Naive thymus-derived CD4-positive, alpha-beta T cell (primary cell): ENCODE measurements at regions of chr2 and their contacts with region 1.

Region 1: GRCh38 chr2:64052468-64053241 is 33.4 kb upstream of the VPS54 start:
- DNase-seq: peak in 7 of 9 donors; percentile 14 to 63 (median 44)
- ATAC-seq: peak; percentile 48
- H3K4me3 ChIP-seq: no peak overlapping the region
- H3K4me3 Mint-ChIP-seq: peak overlapping the region in 9 of 10 donors; percentile 23 to 68 (median 53)
- H3K27ac ChIP-seq: no peak overlapping the region
- H3K27ac Mint-ChIP-seq: peak overlapping the region in 8 of 9 donors; percentile 38 to 92 (median 85)
- H3K4me1 ChIP-seq: peaks cover 3 to 37% of the 10 kb centered on the region in 2 donors
- H3K4me1 Mint-ChIP-seq: peaks cover 35 to 62% (median 54%) of the 10 kb centered on the region in 7 donors
- H3K27me3 ChIP-seq: no peaks in the 10 kb centered on the region
- H3K27me3 Mint-ChIP-seq: peaks cover 0 to 3% (median 0%) of the 10 kb centered on the region in 5 donors

Region 2: DNA sequence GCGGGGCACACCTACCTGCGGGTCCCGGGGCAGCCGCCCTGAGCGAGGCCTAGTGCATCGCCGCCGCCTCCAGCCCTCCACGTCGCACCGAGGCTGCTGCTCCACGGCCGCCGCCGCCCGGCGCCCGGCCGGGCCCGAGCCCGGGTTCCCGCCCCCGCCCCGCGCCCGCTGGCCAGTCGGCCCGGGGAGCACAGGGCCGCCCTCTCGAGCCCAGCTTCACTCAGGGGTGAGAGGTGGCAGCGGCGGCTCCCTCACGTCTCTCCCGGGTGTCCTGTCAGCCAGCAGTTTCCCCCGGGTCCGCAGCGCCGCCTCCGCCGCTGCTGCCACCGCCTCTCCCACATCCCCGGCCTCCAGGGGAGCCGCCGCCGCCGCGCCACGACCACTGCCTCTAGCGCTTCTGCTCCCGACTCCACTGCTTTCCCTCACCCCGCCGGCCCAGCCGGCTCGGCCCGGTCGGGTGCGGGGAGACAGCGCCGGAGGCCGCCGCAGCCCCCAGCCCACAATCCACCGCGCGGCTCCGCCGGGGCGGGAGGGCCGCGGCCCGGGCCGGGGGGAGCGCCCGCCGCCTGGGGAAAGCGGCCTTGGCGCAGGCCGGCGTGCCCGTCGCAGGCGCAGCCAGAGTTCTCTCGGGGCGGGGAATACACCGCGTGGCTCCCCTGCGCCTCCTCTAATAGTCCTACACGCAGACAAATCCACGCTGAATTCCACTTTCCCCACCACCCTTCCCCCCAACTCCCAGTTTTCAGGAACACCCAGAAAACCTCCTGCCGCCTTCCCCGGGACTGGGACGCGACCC is 33.5 kb before region 1 on chr2 and contains the start of gene VPS54:
- CTCF ChIA-PET with region 1: interaction called, 3 read pairs
- POLR2A ChIA-PET with region 1: no interaction called
- intact Hi-C with region 1: loop called in 1 of 2 experiments (anchors 1 kb)
- DNase-seq: peak; percentile 42 to 76 (median 65)
- ATAC-seq: peak; percentile 87
- H3K4me3 ChIP-seq: peak within 1 kb of the TSS; percentile 86
- H3K4me3 Mint-ChIP-seq: peak within 1 kb of the TSS; percentile 94 to 100 (median 98)
- H3K27ac ChIP-seq: peak within 1 kb of the TSS; percentile 79
- H3K27ac Mint-ChIP-seq: peak within 1 kb of the TSS; percentile 95 to 100 (median 97)
- H3K4me1 ChIP-seq: peaks cover 22 to 31% of the 10 kb centered on the region in 2 donors
- H3K4me1 Mint-ChIP-seq: peaks cover 20 to 60% (median 48%) of the 10 kb centered on the region in 7 donors
- H3K27me3 ChIP-seq: no peaks in the 10 kb centered on the region
- H3K27me3 Mint-ChIP-seq: no peaks in the 10 kb centered on the region
- total RNA-seq, gene VPS54: 13.2 to 20.8 (median 15.6) TPM

Region 3: GRCh38 chr2:64062829-64063228 is 10.2 kb after region 1 on chr2:
- CTCF ChIA-PET with region 1: interaction called, 4 read pairs
- POLR2A ChIA-PET with region 1: interaction called, 3 read pairs
- intact Hi-C with region 1: loop called in 1 of 2 experiments (anchors 1 kb)
- DNase-seq: no peak
- ATAC-seq: no peak
- H3K4me3 ChIP-seq: no peak overlapping the region
- H3K4me3 Mint-ChIP-seq: no peak overlapping the region
- H3K27ac ChIP-seq: no peak overlapping the region
- H3K27ac Mint-ChIP-seq: peak overlapping the region in 8 of 9 donors; percentile 83 to 97 (median 92)
- H3K4me1 ChIP-seq: peaks cover 0 to 22% of the 10 kb centered on the region in 2 donors
- H3K4me1 Mint-ChIP-seq: peaks cover 15 to 46% (median 31%) of the 10 kb centered on the region in 7 donors
- H3K27me3 ChIP-seq: no peaks in the 10 kb centered on the region
- H3K27me3 Mint-ChIP-seq: no peaks in the 10 kb centered on the region

Region 4: GRCh38 chr2:64228126-64228678 is 175.5 kb after region 1 on chr2:
- CTCF ChIA-PET with region 1: interaction called, 3 read pairs
- POLR2A ChIA-PET with region 1: interaction called, 3 read pairs
- intact Hi-C with region 1: loop called in 1 of 2 experiments (anchors 1 kb)
- DNase-seq: peak in 8 of 9 donors; percentile 38 to 61 (median 57)
- ATAC-seq: peak; percentile 94
- H3K4me3 ChIP-seq: peak overlapping the region; percentile 48
- H3K4me3 Mint-ChIP-seq: peak overlapping the region; percentile 86 to 100 (median 95)
- H3K27ac ChIP-seq: peak overlapping the region; percentile 78
- H3K27ac Mint-ChIP-seq: peak overlapping the region; percentile 83 to 99 (median 95)
- H3K4me1 ChIP-seq: peaks cover 0 to 15% of the 10 kb centered on the region in 2 donors
- H3K4me1 Mint-ChIP-seq: peaks cover 16 to 45% (median 38%) of the 10 kb centered on the region in 7 donors
- H3K27me3 ChIP-seq: no peaks in the 10 kb centered on the region
- H3K27me3 Mint-ChIP-seq: no peaks in the 10 kb centered on the region

Region 5: GRCh38 chr2:64562148-64562784 is 509.6 kb after region 1 on chr2:
- CTCF ChIA-PET with region 1: interaction called, 3 read pairs
- POLR2A ChIA-PET with region 1: no interaction called
- intact Hi-C with region 1: loop called (anchors 1 kb)
- DNase-seq: peak in 7 of 9 donors; percentile 10 to 63 (median 44)
- ATAC-seq: peak; percentile 79
- H3K4me3 ChIP-seq: no peak overlapping the region
- H3K4me3 Mint-ChIP-seq: no peak overlapping the region
- H3K27ac ChIP-seq: no peak overlapping the region
- H3K27ac Mint-ChIP-seq: peak overlapping the region in 1 of 9 donors; percentile 1
- H3K4me1 ChIP-seq: peaks cover 0 to 4% of the 10 kb centered on the region in 2 donors
- H3K4me1 Mint-ChIP-seq: peaks cover 26 to 49% (median 38%) of the 10 kb centered on the region in 7 donors
- H3K27me3 ChIP-seq: no peaks in the 10 kb centered on the region
- H3K27me3 Mint-ChIP-seq: no peaks in the 10 kb centered on the region